Aorta (tissue), 5 donors: ENCODE measurements at regions of chr2 and their contacts with region 1.

Region 1: DNA sequence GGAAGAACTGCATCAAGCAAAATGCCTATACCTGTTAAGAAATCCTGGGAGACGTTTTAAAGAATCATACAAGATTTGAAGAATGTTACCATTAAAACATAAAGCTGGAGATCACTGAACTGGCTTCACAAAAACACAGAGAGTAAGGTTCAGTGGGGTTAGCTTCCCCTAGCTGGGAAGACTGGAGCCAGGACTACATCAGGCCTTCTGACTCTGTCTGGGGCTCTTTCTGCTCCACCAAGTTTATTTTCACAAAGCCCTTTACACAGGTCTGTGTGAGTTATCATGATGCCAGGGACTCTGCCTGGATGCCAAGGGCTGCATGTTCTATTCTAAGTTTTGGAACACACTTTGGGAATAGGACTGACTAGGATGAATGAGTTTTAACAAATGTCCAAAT is 47.3 kb upstream of the DNER start:
- DNase-seq: no peak
- ATAC-seq: no peak
- H3K4me3 ChIP-seq: no peak overlapping the region
- H3K27ac ChIP-seq: no peak overlapping the region
- H3K4me1 ChIP-seq: peaks cover 0 to 3% of the 10 kb centered on the region in 2 donors
- H3K27me3 ChIP-seq: no peaks in the 10 kb centered on the region

Region 2: GRCh38 chr2:229795058-229795457 is 33.4 kb after region 1 on chr2:
- intact Hi-C with region 1: loop called in 1 of 2 experiments (anchors 1 kb)
- DNase-seq: no peak
- ATAC-seq: no peak
- H3K4me3 ChIP-seq: no peak overlapping the region
- H3K27ac ChIP-seq: no peak overlapping the region
- H3K4me1 ChIP-seq: peaks cover 0 to 3% of the 10 kb centered on the region in 2 donors
- H3K27me3 ChIP-seq: no peaks in the 10 kb centered on the region